Dendritic cell treated with granulocyte-macrophage colony-stimulating factor and Interleukin-4, amounts not matched to agents 40 ng/mL and 50 ng/mL, for 4 days (primary cell): ENCODE measurements at regions of chr7 and their contacts with region 1.

Region 1: GRCh38 chr7:90346336-90347125 is at the start of gene GTPBP10:
- H3K4me3 Mint-ChIP-seq: peak within 1 kb of the TSS; percentile 88
- H3K27ac Mint-ChIP-seq: peak within 1 kb of the TSS; percentile 98
- H3K4me1 Mint-ChIP-seq: peaks cover 15% of the 10 kb centered on the region
- H3K27me3 Mint-ChIP-seq: no peaks in the 10 kb centered on the region

Region 2: DNA sequence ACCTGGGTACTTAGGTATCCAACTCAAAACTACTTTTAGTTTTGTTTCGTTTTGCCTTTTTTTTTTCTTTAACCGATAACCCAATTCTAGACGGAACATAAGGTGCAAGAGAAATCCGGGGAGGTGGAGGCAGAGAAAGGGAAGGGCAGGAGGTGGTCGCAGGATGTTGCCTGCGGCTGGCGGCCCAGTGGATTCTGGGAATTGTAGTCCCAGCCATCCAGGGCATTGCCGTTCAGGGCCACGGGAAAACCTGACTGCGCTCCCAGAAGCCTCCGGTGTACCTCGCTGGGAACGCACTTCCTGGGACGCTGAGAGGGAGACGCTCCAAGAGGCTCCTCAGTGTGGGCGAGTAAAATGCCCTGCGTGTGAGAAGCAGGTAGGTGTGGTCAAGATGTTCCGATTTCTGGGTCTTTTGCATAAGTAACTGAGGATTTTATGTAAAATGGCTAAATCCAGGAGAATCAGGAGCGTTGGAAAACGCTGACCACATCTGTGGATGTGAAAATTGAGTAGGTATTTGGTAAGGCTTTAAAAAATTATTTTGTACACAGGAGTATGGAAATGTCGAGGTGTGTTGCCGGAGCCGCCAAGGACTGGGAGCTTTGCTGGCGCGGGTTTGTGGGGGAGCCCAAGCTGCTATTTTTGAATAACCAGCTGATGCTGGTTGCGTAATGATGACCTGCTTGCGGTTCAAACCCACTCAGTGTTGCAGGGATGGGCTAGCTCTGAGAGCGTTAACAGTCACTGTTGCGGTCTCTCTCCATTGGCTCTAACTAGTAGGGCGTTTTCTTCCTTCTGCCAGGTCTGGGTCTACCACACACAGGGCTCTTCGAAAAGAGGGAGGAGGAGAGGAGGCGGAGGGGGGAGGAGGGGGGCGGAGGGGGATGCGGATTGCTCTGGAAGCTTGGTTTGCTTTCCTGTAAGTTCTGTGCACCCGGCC is 56.9 kb after region 1 on chr7 and contains the start of gene CLDN12:
- intact Hi-C with region 1: loop called (anchors 2 kb)
- H3K4me3 Mint-ChIP-seq: peak within 1 kb of the TSS; percentile 97
- H3K27ac Mint-ChIP-seq: peak within 1 kb of the TSS; percentile 84
- H3K4me1 Mint-ChIP-seq: peaks cover 13% of the 10 kb centered on the region
- H3K27me3 Mint-ChIP-seq: peaks cover 5% of the 10 kb centered on the region

Region 3: GRCh38 chr7:90595801-90596671 is 249.5 kb after region 1 on chr7 and contains the start of gene CDK14:
- intact Hi-C with region 1: loop called (anchors 5 kb)
- H3K4me3 Mint-ChIP-seq: peak within 1 kb of the TSS; percentile 93
- H3K27ac Mint-ChIP-seq: peak within 1 kb of the TSS; percentile 94
- H3K4me1 Mint-ChIP-seq: peaks cover 38% of the 10 kb centered on the region
- H3K27me3 Mint-ChIP-seq: peaks cover 19% of the 10 kb centered on the region

Region 4: DNA sequence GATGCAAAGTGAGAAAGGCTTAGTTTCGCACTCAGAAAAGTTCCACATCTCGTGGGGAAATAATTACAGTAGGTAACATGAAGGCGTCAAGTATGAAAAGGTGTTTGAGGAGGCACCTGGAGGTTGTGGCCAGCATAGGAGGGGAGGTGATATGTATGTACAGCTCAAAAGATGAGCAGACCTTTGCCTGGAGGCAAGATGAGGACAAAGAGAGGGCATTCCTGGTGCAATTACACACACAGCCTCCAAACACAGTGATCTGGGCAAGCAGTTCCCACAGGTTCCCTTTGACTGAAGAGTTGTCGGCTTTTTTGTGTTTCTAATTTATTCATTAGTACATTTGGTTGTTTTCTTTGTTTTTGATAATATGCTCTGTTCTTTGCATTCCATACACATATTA is 296.4 kb after region 1 on chr7:
- intact Hi-C with region 1: no loop called
- H3K4me3 Mint-ChIP-seq: no peak overlapping the region
- H3K27ac Mint-ChIP-seq: no peak overlapping the region
- H3K4me1 Mint-ChIP-seq: no peaks in the 10 kb centered on the region
- H3K27me3 Mint-ChIP-seq: no peaks in the 10 kb centered on the region